Activated T-helper 2 cell treated with anti-CD3 and anti-CD28 coated beads, Interferon-gamma antibody, Interleukin-2, Interleukin-4, amounts not matched to agents 10 μg/mL and 5 μg/mL and 100 μg/mL, durations not matched to agents 14 hours and 24 hours and 36 hours (primary cell): ENCODE measurements at regions of chr4 and their contacts with region 1.

Region 1: DNA sequence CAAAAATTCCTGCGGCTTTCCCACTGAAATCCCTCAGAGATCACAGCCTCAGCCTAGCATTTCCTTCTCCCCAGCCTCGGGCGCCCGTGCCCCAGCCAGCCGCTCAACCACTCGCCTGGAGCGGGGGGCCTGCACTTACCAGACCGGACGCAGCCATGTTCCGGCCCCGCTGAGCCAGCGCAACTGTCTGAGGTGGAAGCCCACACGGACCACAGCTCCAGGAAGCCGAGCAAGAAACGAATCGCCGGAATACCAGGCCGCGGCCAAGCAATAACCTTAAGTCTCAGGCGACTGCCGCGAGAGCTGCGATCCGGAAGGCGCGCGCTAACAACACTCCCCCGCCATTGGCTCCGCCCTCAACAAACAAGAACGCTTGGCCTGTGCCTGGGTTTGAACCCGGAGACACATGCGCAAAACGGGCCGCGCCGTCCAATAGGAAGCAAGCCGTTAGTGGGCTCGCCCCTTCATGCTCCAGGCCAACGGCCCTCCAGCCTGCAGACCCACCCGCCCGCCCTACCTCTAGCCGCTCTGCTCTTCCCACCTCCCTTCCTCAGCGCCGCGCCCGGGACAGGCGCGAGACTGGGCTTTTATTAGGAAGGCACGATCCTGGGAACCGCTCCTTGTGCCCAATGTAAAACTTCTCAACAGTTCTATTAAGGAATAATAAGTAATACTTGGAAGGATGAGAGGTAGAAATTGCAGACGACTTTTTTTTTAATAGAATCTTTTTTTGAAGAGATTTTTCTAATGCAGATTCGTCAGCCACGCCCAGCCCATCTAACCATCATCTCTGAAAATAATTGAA is at the start of gene CENPC:
- DNase-seq: peak; percentile 93
- H3K4me3 Mint-ChIP-seq: peak within 1 kb of the TSS; percentile 100
- H3K27ac Mint-ChIP-seq: peak within 1 kb of the TSS; percentile 99
- H3K4me1 Mint-ChIP-seq: peaks cover 35% of the 10 kb centered on the region
- H3K27me3 Mint-ChIP-seq: no peaks in the 10 kb centered on the region
- total RNA-seq, gene CENPC: 31.6 and 32.0 TPM in 2 replicates

Region 2: GRCh38 chr4:67558493-67558892 is 13.1 kb after region 1 on chr4 and contains the start of gene STAP1:
- intact Hi-C with region 1: loop called (anchors 1 kb)
- DNase-seq: peak; percentile 52
- H3K4me3 Mint-ChIP-seq: peak within 1 kb of the TSS; percentile 93
- H3K27ac Mint-ChIP-seq: peak within 1 kb of the TSS; percentile 95
- H3K4me1 Mint-ChIP-seq: peaks cover 53% of the 10 kb centered on the region
- H3K27me3 Mint-ChIP-seq: no peaks in the 10 kb centered on the region
- total RNA-seq, gene STAP1: 18.8 and 18.9 TPM in 2 replicates

Region 3: GRCh38 chr4:67632492-67632891 is 87.1 kb after region 1 on chr4:
- intact Hi-C with region 1: loop called (anchors 2 kb)
- DNase-seq: no peak
- H3K4me3 Mint-ChIP-seq: peak overlapping the region; percentile 87
- H3K27ac Mint-ChIP-seq: peak overlapping the region; percentile 88
- H3K4me1 Mint-ChIP-seq: peaks cover 22% of the 10 kb centered on the region
- H3K27me3 Mint-ChIP-seq: no peaks in the 10 kb centered on the region

Region 4: DNA sequence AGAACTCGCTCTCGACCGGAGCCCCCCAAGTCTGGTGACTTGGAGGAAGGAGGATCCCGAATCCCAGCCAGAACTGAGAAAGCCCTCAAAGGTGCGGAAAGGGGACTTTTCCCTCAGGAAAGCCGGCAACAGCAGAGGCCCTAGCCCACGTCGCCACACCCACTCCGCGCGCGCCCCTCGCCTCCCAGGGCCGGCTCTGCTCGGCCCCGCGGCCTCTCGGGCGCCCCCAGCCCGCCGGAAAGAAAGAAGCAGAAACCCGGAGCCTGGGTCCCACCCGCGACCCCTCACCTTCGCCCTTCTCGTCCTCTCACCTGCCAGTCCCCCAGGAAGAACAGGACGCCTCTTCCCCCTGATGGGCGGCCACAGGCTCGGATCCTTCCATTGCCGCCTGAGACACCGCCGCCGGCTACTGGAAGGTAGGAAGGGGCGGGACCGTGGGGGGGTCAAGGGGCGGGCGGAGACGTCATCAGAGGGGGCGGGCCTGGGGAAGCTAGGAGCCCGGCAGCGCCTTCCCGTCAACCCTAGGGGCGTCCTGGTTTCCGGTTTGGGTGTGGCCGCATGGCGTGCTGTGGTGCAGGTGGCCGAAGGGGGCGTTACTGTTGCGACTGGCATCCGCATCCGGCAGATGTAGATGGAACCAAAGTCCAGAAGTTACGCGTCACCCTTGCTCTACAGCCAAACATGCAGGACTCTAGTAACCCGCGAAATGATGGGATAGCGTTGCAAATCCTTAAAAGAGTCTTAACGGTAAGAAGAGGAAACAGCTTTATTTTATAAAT is 155.5 kb after region 1 on chr4 and contains the start of gene UBA6:
- intact Hi-C with region 1: loop called (anchors 1 kb)
- DNase-seq: peak; percentile 94
- H3K4me3 Mint-ChIP-seq: peak within 1 kb of the TSS; percentile 99
- H3K27ac Mint-ChIP-seq: peak within 1 kb of the TSS; percentile 96
- H3K4me1 Mint-ChIP-seq: peaks cover 53% of the 10 kb centered on the region
- H3K27me3 Mint-ChIP-seq: no peaks in the 10 kb centered on the region
- total RNA-seq, gene UBA6: 84.8 and 88.4 TPM in 2 replicates

Region 5: GRCh38 chr4:67909905-67910584 is 364.6 kb after region 1 on chr4:
- intact Hi-C with region 1: loop called (anchors 1 kb)
- DNase-seq: no peak
- H3K4me3 Mint-ChIP-seq: no peak overlapping the region
- H3K27ac Mint-ChIP-seq: no peak overlapping the region
- H3K4me1 Mint-ChIP-seq: no peaks in the 10 kb centered on the region
- H3K27me3 Mint-ChIP-seq: peaks cover 15% of the 10 kb centered on the region